Activated CD4-positive, alpha-beta memory T cell treated with anti-CD3 and anti-CD28 coated beads for 36 hours (primary cell): ENCODE measurements at regions of chr12 and their contacts with region 1.

Region 1: GRCh38 chr12:53321074-53321814 is at the start of gene AAAS:
- DNase-seq: peak; percentile 98
- H3K4me3 Mint-ChIP-seq: peak within 1 kb of the TSS; percentile 86
- H3K27ac Mint-ChIP-seq: peak within 1 kb of the TSS; percentile 94
- H3K4me1 Mint-ChIP-seq: peaks cover 38% of the 10 kb centered on the region
- H3K27me3 Mint-ChIP-seq: no peaks in the 10 kb centered on the region
- total RNA-seq, gene AAAS: 74.5 to 80.7 TPM

Region 2: DNA sequence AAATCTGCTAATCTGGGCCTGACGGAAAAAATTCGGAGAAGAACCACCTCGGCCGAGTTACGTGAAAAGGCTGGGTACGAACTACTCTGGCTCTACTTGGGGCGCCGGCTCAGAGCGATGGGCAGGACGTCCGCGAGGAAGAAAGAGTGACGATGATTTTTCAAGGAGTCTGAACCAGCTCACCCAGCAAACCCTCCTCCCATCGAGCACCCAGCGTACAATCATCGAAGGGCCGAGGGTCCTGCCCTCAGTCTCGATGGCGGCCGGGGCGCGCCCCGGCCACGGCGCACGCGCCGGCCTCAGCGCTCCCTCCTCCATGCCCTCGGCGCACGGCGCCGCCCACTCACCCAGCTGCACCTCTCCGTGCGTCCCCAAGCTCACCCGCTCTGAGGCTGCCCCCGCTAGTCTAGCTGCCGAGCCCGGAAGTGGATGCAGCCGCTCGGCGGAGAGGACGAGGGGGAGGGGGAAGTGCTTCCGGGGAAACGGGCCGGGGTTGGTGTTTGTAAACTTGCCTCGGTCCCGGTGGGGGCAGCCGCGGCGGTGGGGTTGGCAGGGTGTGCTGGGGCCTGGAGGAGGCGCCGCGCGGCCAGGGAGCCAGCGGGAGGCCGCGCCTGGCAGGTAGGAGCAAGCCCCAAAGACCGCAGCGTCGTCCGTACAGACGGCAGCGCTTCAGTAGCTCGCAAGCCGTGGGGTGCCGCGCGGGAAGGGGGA is 140.9 kb before region 1 on chr12 and contains the starts of genes CSAD and ZNF740:
- CTCF ChIA-PET with region 1: interaction called, 11 read pairs
- POLR2A ChIA-PET with region 1: interaction called, 3 read pairs
- intact Hi-C with region 1: no loop called
- DNase-seq: peak; percentile 99
- H3K4me3 Mint-ChIP-seq: peak within 1 kb of the TSS; percentile 96
- H3K27ac Mint-ChIP-seq: peak within 1 kb of the TSS; percentile 94
- H3K4me1 Mint-ChIP-seq: peaks cover 47% of the 10 kb centered on the region
- H3K27me3 Mint-ChIP-seq: no peaks in the 10 kb centered on the region
- total RNA-seq, gene CSAD: 21.4 to 23.7 TPM
- total RNA-seq, gene ZNF740: 32.6 to 37.5 TPM

Region 3: GRCh38 chr12:53220801-53221202 is 100.4 kb before region 1 on chr12:
- CTCF ChIA-PET with region 1: interaction called, 111 read pairs
- POLR2A ChIA-PET with region 1: interaction called, 3 read pairs
- intact Hi-C with region 1: no loop called
- DNase-seq: peak; percentile 92
- H3K4me3 Mint-ChIP-seq: peak overlapping the region; percentile 80
- H3K27ac Mint-ChIP-seq: peak overlapping the region; percentile 93
- H3K4me1 Mint-ChIP-seq: peaks cover 74% of the 10 kb centered on the region
- H3K27me3 Mint-ChIP-seq: no peaks in the 10 kb centered on the region

Region 4: GRCh38 chr12:53302903-53303302 is 18.3 kb before region 1 on chr12:
- CTCF ChIA-PET with region 1: interaction called, 66 read pairs
- POLR2A ChIA-PET with region 1: interaction called, 19 read pairs
- intact Hi-C with region 1: loop called (anchors 1 kb)
- DNase-seq: no peak
- H3K4me3 Mint-ChIP-seq: no peak overlapping the region
- H3K27ac Mint-ChIP-seq: peak overlapping the region; percentile 15
- H3K4me1 Mint-ChIP-seq: peaks cover 44% of the 10 kb centered on the region
- H3K27me3 Mint-ChIP-seq: no peaks in the 10 kb centered on the region

Region 5: DNA sequence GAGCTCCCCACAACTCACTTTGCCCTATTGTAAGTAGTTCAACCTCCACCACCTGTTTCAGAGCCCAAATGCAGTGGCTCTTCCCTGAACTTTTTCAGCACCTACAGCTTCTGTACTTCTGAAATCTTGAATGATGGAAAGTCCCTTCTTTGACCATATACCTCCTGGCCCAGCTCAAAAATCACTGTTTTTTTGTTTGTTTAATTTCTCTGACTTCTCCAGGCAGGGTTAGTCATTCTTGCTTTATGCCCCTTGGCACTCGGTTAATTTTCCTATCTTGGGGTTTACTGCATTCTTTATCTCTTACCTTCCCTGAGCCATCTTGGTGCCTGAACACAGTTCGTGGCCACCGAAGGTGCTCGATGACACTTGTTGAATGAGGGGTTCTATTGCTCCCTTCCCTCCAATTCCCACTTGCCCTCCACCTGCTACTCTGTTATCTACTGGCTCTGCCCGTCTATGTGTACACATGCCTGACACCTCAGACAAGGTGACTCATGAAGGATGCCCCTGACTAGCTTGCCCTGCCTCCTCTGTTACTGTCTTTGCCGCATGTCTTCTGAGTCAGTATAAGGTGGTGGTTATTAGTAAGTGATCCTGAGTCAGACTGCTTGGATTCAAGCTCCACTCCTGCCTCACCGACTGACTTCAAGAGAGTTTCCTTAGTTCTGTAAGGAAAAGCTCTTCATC is 106.8 kb after region 1 on chr12:
- CTCF ChIA-PET with region 1: interaction called, 17 read pairs
- POLR2A ChIA-PET with region 1: no interaction called
- intact Hi-C with region 1: no loop called
- DNase-seq: peak; percentile 69
- H3K4me3 Mint-ChIP-seq: no peak overlapping the region
- H3K27ac Mint-ChIP-seq: no peak overlapping the region
- H3K4me1 Mint-ChIP-seq: peaks cover 14% of the 10 kb centered on the region
- H3K27me3 Mint-ChIP-seq: no peaks in the 10 kb centered on the region

Region 6: GRCh38 chr12:53508534-53509199 is 187.4 kb after region 1 on chr12:
- CTCF ChIA-PET with region 1: interaction called, 25 read pairs
- POLR2A ChIA-PET with region 1: interaction called, 5 read pairs
- intact Hi-C with region 1: no loop called
- DNase-seq: peak; percentile 92
- H3K4me3 Mint-ChIP-seq: no peak overlapping the region
- H3K27ac Mint-ChIP-seq: peak overlapping the region; percentile 67
- H3K4me1 Mint-ChIP-seq: peaks cover 12% of the 10 kb centered on the region
- H3K27me3 Mint-ChIP-seq: no peaks in the 10 kb centered on the region